GM10248 (cell line): ENCODE measurements at regions of chr20 and their contacts with region 1.

Region 1: GRCh38 chr20:44609511-44610312 is 27.3 kb downstream of the PKIG start:
- DNase-seq: peak; percentile 82
- CTCF ChIP-seq: peak; percentile 95

Region 2: GRCh38 chr20:44388466-44389023 is 221.2 kb before region 1 on chr20:
- CTCF ChIA-PET with region 1: interaction called, 30 read pairs
- POLR2A ChIA-PET with region 1: no interaction called
- DNase-seq: peak; percentile 85
- CTCF ChIP-seq: peak; percentile 91

Region 3: DNA sequence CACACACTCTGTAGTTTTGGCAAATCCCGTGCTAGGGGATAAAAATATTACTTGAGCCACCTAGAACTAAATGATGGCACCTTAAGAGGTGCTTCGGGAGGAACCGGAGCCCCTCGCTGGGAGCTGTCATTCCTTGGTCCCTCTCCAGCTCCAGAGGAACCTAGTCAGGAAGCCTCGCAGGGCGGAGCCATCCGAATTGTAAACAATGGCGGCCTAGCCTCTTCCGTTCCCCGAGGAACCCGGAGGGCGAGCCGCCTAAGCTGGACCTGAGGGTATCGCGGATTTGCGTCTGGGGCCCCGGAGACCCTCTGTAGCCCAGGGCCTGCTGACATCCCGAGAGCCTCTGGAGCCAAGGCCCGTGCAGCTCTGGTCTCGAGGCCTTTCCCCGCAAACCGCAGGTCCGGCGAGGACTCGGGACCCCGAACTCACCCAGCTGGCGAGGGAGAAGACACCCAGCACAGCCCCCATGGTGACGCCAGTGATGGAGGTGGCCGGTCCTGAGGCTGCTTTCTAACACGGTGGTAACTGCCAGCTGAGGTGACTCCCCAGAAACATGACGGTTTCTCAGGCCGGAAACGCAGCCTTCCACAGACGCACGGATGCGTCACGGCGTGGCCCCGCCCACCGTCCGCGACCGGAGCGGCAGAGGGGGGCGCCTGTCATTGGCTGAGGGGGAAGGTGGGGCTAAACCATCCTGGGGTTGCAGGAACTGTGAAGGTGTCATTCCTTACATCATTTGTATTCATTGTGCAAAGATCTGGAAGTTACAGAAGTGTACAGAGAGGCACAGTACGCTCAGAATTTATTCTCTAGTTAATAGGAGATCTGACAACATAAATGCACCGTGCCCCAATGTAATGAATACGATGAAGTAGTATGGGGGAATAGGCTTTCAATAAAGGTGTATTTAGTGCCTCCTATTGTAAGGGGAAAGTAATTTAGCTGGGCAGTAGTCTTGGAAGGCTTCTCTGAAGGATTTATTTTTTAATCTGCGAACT is 87.9 kb before region 1 on chr20 and contains the start of gene SERINC3:
- CTCF ChIA-PET with region 1: interaction called, 15 read pairs
- POLR2A ChIA-PET with region 1: no interaction called
- DNase-seq: peak; percentile 97
- CTCF ChIP-seq: peak; percentile 13

Region 4: GRCh38 chr20:44576297-44576696 is 33.4 kb before region 1 on chr20:
- CTCF ChIA-PET with region 1: interaction called, 22 read pairs
- POLR2A ChIA-PET with region 1: no interaction called
- DNase-seq: peak; percentile 55
- CTCF ChIP-seq: peak; percentile 63

Region 5: DNA sequence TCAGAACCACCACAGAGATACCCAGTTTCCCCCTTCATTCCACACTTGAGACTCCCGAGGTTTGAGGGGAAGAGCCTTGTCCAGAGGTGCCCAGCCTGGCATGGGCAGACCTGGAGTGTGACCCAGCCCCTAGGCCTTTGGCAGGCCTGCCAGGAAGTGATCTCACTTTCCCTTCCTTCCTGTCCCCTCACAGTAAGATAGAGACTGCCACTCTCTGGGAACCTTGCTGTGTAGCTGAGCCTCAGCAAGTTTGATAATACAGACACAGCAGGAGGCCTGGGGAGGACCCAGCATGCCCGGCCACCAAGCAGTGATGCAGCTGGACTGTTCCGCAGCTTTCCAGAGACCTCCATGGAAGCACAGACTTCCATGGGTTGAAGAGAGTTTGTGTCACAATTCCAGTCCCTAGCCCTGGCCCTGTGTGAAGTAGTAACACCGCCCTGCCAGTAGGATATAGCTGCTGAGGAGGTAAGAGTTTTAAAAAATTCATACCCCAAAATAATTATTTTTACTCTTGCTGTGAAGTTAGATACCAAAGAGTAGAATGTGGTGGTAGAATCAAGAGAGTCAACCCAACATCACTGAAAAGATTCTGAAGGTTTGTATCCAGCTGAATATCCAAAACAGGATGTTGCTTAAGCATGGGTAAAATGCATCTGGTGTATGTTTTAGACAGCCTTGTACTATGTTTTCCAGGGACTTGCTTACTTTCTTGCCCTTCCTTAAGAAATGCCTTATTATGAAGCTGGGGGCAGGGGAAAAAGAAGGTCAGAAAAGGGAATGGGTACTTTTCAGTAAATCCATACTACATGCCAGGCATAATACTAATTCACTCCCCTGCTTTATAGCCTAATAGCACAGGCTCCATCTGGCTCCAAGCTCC is 11.0 kb before region 1 on chr20:
- CTCF ChIA-PET with region 1: interaction called, 65 read pairs
- POLR2A ChIA-PET with region 1: no interaction called
- DNase-seq: no peak
- CTCF ChIP-seq: peak; percentile 14